Activated CD8-positive, alpha-beta memory T cell treated with anti-CD3 and anti-CD28 coated beads, Interleukin-2, amount 10 ng/mL, durations not matched to agents 7 days and 5 days (primary cell): ENCODE measurements at regions of chr18 and their contacts with region 1.

Region 1: DNA sequence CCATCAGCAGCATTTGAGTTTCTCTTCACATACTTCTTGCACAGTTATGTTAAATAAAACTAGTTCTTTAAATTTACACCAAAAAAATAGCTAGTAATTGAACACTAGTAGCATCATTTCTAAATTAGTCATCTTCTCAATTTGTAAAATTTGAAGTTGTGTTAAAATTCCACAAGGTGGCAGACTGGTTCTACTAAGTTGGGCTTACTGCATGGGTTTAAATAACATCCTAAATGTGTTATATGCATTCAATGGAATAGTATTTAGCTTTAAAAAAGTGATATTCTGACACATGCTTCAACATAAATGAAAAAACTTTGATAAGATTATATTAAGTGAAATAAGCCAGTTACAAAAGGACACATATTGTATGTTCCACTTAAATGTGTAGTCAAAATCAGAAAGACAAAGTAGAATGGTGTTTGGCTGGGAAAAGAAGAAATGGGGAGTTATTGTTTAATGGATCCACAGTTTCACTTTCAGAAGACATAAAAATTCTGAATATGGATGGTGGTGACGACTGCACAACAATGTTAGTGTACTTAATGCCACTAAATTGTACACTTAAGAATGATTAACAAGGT is 28.7 kb upstream of the RPRD1A start:
- DNase-seq: no peak
- ATAC-seq: no peak
- H3K4me3 Mint-ChIP-seq: no peak overlapping the region
- H3K27ac Mint-ChIP-seq: no peak overlapping the region
- H3K4me1 Mint-ChIP-seq: peaks cover 11% of the 10 kb centered on the region
- H3K27me3 Mint-ChIP-seq: peaks cover 14% of the 10 kb centered on the region

Region 2: DNA sequence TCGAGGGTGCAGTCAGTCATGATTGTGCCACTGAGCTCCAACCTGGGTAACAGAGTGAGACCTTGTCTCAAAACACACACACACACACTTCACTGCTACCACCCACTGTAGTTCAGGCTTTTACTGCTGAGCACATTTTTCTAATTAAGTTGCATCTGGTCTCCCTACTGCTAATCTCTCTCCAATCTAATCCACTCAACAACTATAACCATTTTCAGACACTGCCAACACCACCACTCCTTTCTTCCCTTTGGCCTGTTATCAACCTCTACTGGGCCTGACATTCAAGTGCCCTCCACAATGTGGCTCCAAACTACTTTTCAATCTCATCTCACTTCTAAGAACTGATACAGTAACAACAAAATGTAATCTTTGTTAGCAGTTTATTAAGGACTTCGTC is 78.8 kb before region 1 on chr18:
- CTCF ChIA-PET with region 1: interaction called, 13 read pairs
- DNase-seq: no peak
- ATAC-seq: no peak
- H3K4me3 Mint-ChIP-seq: no peak overlapping the region
- H3K27ac Mint-ChIP-seq: no peak overlapping the region
- H3K4me1 Mint-ChIP-seq: no peaks in the 10 kb centered on the region
- H3K27me3 Mint-ChIP-seq: no peaks in the 10 kb centered on the region

Region 3: GRCh38 chr18:36109737-36110136 is 13.7 kb after region 1 on chr18:
- CTCF ChIA-PET with region 1: no interaction called
- DNase-seq: no peak
- ATAC-seq: no peak
- H3K4me3 Mint-ChIP-seq: no peak overlapping the region
- H3K27ac Mint-ChIP-seq: no peak overlapping the region
- H3K4me1 Mint-ChIP-seq: no peaks in the 10 kb centered on the region
- H3K27me3 Mint-ChIP-seq: no peaks in the 10 kb centered on the region

Region 4: DNA sequence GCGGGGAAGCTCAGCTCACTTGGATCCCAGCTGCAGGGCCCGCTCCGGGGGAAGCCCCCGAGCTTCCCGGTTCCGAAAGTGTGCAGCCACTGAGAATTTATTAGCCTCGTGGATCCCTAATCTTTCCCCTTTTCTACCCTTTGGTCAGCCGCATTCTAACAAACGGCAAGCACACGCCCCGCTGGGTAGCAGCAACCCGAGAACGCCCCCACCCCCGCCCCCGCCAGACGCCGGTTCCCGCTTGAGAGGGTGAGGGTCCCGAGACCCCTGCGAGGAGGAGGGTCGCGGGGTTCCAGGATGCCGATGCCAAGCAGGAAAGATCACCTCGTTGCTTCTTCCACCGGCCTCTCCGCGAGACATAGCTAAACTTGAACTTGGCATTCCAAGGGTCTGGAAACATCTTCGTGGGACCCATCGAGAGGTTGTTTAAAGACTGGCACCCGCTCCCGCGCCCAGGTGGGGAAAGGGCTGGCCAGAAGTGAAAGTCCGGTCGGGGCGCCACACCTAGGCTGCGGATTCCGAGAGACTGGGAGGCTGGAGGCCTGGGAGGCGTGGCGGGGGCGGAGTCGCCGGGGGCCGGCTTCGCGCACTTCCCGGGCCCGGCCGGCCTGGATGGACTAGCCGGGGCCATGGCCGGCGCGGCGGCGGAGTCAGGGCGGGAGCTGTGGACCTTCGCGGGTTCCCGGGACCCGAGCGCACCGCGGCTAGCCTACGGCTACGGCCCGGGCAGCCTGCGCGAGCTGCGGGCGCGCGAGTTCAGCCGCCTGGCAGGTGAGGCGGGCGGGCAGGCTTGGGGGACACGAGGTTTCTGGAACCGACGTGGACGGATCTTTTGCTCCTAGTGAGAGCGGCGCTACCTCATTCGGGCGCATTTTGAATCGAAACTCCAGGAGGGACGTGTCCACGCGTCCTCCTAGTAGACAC is 91.1 kb after region 1 on chr18 and contains the start of gene MOCOS:
- CTCF ChIA-PET with region 1: no interaction called
- DNase-seq: peak; percentile 56
- ATAC-seq: peak; percentile 96
- H3K4me3 Mint-ChIP-seq: peak within 1 kb of the TSS; percentile 71
- H3K27ac Mint-ChIP-seq: no peak within 1 kb of the TSS
- H3K4me1 Mint-ChIP-seq: peaks cover 14% of the 10 kb centered on the region
- H3K27me3 Mint-ChIP-seq: peaks cover 29% of the 10 kb centered on the region
- total RNA-seq, gene MOCOS: 0.40 to 0.64 TPM

Region 5: DNA sequence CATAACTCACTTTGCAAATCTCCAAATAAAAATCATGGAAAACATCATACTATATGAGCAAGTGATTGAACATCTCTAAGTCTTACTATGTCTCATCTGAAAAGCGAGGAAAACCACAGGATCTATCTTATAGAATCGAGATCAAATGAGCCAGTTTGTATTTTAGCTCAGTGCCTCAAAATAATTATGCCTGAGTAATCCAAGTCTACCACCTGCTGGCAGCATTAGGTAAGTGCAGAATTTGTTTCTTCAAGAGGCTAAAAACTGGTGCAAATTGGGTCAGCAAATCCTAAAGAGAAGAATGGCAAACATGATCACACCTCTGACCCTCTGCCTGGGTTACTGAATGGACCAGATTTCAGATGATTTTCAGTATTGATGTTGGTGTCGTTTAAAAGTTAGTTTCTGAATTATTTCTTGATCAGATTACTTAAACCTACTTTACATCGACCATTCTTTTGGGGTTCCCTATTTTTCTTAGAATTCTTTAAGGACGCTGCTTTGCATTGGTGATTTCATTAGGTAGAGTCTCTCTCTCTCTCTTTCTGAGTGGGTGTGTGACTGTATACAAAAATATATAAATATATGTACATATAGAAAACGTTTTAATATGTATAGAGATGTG is 188.8 kb after region 1 on chr18:
- CTCF ChIA-PET with region 1: interaction called, 44 read pairs
- DNase-seq: peak; percentile 57
- ATAC-seq: no peak
- H3K4me3 Mint-ChIP-seq: no peak overlapping the region
- H3K27ac Mint-ChIP-seq: no peak overlapping the region
- H3K4me1 Mint-ChIP-seq: no peaks in the 10 kb centered on the region
- H3K27me3 Mint-ChIP-seq: peaks cover 50% of the 10 kb centered on the region